ENCODE measurements at regions of chr2 and their contacts with region 1.

Region 1: GRCh38 chr2:32553829-32554432 is 73.9 kb upstream of the TTC27 start:
- DNase-seq: no peak
- H3K4me3 ChIP-seq: no peak overlapping the region
- H3K27ac ChIP-seq: peak overlapping the region in 13 of 59 donors; percentile 5 to 61 (median 33)
- H3K27me3 ChIP-seq: no peaks in the 10 kb centered on the region
- CTCF ChIP-seq: peak; percentile 66 to 96 (median 82)

Region 2: DNA sequence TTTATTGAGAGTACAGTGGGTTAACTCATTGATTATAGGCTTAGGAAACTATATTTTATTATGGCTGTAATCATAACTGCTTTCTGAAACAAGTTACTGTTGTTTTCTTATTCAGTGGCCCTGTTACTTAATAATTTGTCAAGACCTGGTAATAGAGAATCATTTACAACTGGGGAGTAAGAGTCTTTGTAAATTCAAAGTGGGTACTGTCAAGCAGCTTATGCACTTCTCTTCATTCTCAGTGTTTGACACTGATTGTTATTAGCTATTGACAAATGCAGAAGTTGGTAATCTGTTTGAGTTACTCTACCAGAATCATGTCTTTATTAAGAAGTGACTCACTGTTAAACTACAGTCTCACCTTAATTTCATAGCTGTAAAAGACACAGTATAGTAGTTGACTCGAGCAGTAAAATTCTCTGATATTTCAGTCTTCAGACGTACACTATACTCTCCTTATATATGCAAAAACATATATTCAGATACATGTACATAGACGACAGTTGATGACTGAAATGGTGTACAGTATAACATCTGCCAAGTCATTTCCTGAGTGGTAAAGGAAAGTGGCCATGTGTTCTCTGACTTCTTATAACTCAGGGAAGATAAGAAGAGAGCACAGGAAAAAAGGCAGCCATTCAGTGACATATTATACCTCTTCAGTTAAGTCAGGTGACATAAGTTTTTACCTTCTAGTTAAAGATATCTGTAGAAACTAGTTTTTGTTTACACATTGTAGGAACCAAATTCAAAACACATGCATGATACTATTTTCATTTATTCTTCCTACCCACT is 37.9 kb after region 1 on chr2:
- intact Hi-C with region 1: no loop called
- DNase-seq: no peak
- H3K4me3 ChIP-seq: no peak overlapping the region
- H3K27ac ChIP-seq: peak overlapping the region in 1 of 59 donors; percentile 17
- H3K27me3 ChIP-seq: no peaks in the 10 kb centered on the region
- CTCF ChIP-seq: no peak

Region 3: DNA sequence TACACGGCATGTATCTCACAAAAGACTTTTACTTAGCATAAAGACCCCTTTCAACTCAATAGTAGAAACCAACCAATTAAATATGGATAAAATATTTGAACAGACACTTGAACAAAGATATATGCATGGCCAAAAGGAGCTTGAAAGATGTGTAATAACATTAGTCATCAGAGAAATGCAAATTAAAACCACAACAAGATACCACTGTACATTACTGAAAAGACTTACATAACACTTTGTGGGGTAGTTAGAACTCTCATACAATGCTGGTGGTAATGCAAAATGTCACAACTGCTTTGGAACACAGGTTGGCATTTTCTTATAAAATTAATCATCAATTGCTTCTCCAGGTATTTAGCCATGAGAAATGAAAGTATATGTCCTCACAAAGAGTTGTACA is 134.6 kb after region 1 on chr2:
- intact Hi-C with region 1: no loop called
- DNase-seq: no peak
- H3K4me3 ChIP-seq: no peak overlapping the region
- H3K27ac ChIP-seq: no peak overlapping the region
- H3K27me3 ChIP-seq: no peaks in the 10 kb centered on the region
- CTCF ChIP-seq: no peak

Region 4: GRCh38 chr2:32760628-32761027 is 206.7 kb after region 1 on chr2:
- intact Hi-C with region 1: loop called in 1 of 2 experiments (anchors 5 kb)
- DNase-seq: peak in 2 of 10 donors; percentile 11 to 50
- H3K4me3 ChIP-seq: no peak overlapping the region
- H3K27ac ChIP-seq: no peak overlapping the region
- H3K27me3 ChIP-seq: no peaks in the 10 kb centered on the region
- CTCF ChIP-seq: no peak